Activated CD4-positive, alpha-beta T cell treated with anti-CD3 and anti-CD28 coated beads for 36 hours (primary cell): ENCODE measurements at regions of chr20 and their contacts with region 1.

Region 1: GRCh38 chr20:3000852-3001523 is 42.4 kb upstream of the GNRH2 start:
- DNase-seq: peak; percentile 23
- ATAC-seq: peak; percentile 98
- H3K4me3 Mint-ChIP-seq: no peak overlapping the region
- H3K27ac Mint-ChIP-seq: peak overlapping the region; percentile 59
- H3K4me1 Mint-ChIP-seq: peaks cover 11% of the 10 kb centered on the region
- H3K27me3 Mint-ChIP-seq: no peaks in the 10 kb centered on the region

Region 2: GRCh38 chr20:2984956-2985661 is 15.9 kb before region 1 on chr20:
- CTCF ChIA-PET with region 1: interaction called, 23 read pairs
- POLR2A ChIA-PET with region 1: no interaction called
- intact Hi-C with region 1: loop called in 1 of 2 experiments (anchors 2 kb)
- DNase-seq: peak; percentile 71
- ATAC-seq: no peak
- H3K4me3 Mint-ChIP-seq: no peak overlapping the region
- H3K27ac Mint-ChIP-seq: no peak overlapping the region
- H3K4me1 Mint-ChIP-seq: peaks cover 25% of the 10 kb centered on the region
- H3K27me3 Mint-ChIP-seq: no peaks in the 10 kb centered on the region

Region 3: GRCh38 chr20:3115190-3116107 is 114.5 kb after region 1 on chr20:
- CTCF ChIA-PET with region 1: no interaction called
- POLR2A ChIA-PET with region 1: no interaction called
- intact Hi-C with region 1: no loop called
- DNase-seq: peak; percentile 32
- ATAC-seq: peak; percentile 52
- H3K4me3 Mint-ChIP-seq: no peak overlapping the region
- H3K27ac Mint-ChIP-seq: no peak overlapping the region
- H3K4me1 Mint-ChIP-seq: peaks cover 13% of the 10 kb centered on the region
- H3K27me3 Mint-ChIP-seq: no peaks in the 10 kb centered on the region

Region 4: DNA sequence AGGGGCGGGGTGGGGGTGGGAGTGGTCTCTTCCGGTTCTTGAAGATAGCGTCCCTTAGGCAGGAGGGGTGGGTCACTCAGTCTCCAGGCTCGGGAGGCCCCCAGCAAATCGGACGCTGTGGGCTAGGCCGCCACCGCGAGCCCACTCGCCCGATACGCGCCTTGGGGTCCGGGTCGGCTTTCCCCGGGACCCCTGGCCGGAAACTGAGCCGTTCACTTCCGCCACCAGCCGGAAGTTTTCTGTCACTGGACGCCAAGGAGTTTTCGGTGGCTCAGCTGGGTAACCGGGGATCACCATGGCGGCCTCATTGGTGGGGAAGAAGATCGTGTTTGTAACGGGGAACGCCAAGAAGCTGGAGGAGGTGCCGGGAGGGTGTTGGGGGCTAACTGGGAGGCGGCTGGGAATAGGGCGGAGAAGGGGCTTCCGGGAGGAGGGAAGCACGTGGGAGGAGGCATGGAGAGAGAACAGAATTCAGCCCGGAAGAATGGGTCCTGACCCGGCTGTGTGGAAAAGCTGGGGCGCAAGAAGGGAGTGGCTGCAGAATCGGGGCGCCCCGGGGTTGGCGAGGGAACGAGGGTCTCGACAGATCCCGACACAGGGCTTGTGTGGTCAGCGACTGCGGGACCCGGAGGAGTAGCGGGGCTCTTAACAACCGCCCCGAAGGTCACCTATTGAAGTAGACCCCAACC is 208.4 kb after region 1 on chr20 and contains the start of gene ITPA:
- CTCF ChIA-PET with region 1: no interaction called
- POLR2A ChIA-PET with region 1: no interaction called
- intact Hi-C with region 1: no loop called
- DNase-seq: peak; percentile 78
- ATAC-seq: peak; percentile 43
- H3K4me3 Mint-ChIP-seq: peak within 1 kb of the TSS; percentile 90
- H3K27ac Mint-ChIP-seq: peak within 1 kb of the TSS; percentile 92
- H3K4me1 Mint-ChIP-seq: peaks cover 13% of the 10 kb centered on the region
- H3K27me3 Mint-ChIP-seq: no peaks in the 10 kb centered on the region
- total RNA-seq, gene ITPA: 32.7 to 67.5 TPM